Activated CD4-positive, alpha-beta T cell treated with anti-CD3 and anti-CD28 coated beads for 36 hours (primary cell): ENCODE measurements at regions of chr15 and their contacts with region 1.

Region 1: DNA sequence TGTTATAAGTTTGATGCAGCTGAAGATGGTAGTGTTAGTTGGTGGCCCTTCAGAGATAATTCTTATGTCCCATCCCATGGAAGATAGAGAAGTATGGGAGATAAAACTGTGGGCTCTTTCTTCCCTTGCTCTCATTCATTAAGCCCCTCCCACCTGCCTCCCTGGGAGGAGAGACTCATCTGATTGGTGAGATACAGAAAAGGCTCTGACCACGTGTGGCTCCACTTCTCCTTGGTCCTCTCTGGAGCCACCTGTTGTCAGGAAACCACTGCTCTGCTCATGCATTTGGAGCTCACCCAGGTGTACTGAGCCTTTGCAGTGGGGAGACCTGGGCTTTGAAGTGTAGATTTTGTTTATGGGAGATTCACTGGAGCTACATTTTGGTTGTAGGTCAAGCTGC is 293.2 kb upstream of the RASGRP1 start:
- DNase-seq: no peak
- ATAC-seq: no peak
- H3K4me3 Mint-ChIP-seq: no peak overlapping the region
- H3K27ac Mint-ChIP-seq: no peak overlapping the region
- H3K4me1 Mint-ChIP-seq: no peaks in the 10 kb centered on the region
- H3K27me3 Mint-ChIP-seq: peaks cover 12% of the 10 kb centered on the region

Region 2: DNA sequence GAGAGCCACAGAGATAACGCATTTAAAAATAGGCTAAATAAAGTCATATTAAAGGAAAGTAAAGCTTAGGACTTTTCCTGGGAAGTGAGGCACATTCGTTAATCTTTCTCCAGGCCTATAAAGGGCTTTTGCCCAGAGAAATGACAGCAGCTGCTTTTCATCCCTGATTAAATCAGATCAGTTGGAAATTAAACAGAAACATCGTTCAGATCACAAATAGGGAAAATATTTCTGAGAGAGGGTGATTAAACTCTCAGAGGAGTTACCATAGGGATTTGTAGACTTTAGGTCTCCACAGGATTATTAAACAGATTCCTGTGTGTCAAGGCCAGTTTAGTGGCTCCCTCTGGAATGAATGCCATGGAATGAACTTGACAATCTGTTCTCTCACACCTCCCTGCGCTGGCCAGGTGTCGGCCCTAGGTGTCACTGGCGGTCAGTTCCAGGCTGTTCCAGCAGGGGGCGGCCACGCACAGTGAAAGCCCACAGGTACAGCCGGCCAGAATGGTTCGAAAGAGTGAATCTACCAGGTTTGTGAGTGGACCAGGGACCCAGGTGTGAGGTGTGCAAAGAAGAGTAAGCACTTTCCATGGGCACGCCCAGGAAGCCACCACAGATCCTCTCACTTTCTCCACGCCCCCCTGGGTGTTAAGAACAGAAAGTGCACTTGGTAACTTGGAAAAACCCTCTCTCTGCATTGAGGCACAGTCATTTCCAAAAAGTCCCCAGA is 40.2 kb before region 1 on chr15:
- CTCF ChIA-PET with region 1: no interaction called
- POLR2A ChIA-PET with region 1: no interaction called
- intact Hi-C with region 1: loop called in 1 of 2 experiments (anchors 2 kb)
- DNase-seq: peak; percentile 90
- ATAC-seq: peak; percentile 96
- H3K4me3 Mint-ChIP-seq: no peak overlapping the region
- H3K27ac Mint-ChIP-seq: no peak overlapping the region
- H3K4me1 Mint-ChIP-seq: peaks cover 5% of the 10 kb centered on the region
- H3K27me3 Mint-ChIP-seq: peaks cover 8% of the 10 kb centered on the region